ENCODE measurements at regions of chr17 and their contacts with region 1.

Region 1: DNA sequence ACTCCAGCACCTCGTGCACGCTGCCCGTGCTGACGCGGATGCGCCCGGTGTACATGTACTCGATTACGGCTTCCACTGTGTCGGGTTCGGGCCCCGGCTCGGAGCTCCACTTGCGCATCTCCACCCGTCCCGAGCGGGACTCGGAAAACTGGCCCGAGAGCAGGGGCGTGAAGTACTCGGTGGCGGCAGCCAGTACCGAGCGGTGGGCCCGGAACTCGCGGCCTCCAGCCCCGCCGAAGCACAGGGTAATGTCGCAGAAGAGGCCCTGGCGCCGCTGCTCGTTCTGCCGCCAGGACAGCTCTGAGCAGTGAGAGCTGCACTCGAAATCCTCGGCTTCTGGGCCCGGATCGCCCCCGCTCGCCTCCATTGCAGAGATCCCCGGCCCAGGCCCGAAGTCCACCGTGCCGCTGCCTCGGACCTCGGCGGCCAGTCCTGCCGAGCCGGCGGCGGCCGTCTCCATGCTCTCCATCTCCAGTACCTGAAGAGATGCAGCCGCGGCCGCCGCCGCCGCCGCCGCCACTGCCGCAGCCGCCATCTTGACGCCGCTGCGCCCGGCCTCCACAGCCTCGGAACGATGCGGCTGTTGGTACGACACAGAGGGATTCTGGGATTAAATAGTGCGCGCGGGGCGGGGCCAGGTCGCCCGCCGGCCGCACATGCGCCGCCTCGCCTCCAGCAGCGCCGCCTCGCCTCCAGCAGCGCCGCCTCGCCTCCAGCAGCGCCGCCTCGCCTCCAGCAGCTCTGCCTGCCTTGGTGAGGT is at the start of gene KLHL11:
- DNase-seq: peak; percentile 96

Region 2: DNA sequence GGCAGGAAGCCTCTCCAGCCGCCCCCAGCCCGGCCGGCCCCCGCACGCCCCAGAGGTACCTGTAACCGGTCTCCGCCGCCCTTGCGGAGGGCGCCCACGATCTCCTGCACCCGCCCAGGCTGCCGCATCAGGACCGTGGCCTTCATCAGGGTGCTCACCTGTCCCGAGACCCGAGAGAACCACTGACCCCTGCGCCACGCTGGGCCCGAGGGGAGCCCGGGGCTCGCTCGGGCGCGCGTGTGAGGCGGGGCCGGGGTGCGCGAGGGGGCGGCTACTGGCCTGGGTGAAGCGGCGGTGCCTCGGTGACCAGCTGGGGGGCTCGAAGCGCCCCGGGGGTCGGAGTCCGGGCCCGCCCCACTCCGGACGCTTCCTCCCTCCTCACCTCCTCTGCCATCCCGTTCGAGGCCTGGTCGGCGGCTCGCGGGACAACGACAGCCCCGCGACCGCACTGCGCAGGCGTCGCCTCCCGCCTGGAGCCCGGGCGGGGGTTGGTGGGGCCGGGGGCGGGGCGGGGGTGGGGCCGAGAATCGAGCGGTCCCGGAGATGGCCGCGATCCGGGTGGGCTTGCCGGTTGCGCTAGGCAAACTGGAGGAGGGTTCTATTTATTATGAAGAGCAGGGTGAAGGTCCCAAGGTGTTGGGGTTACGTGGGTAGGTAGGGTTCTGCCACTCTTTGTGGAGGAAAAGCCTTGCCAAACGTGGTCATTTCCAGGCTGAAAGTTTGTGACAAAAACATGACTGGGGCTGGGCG is 29.0 kb before region 1 on chr17 and contains the start of gene NT5C3B:
- CTCF ChIA-PET with region 1: no interaction called
- POLR2A ChIA-PET with region 1: interaction called, 12 read pairs
- DNase-seq: peak; percentile 98

Region 3: GRCh38 chr17:41848788-41849187 is 16.2 kb before region 1 on chr17:
- CTCF ChIA-PET with region 1: interaction called, 3 read pairs
- POLR2A ChIA-PET with region 1: interaction called, 12 read pairs
- DNase-seq: no peak

Region 4: DNA sequence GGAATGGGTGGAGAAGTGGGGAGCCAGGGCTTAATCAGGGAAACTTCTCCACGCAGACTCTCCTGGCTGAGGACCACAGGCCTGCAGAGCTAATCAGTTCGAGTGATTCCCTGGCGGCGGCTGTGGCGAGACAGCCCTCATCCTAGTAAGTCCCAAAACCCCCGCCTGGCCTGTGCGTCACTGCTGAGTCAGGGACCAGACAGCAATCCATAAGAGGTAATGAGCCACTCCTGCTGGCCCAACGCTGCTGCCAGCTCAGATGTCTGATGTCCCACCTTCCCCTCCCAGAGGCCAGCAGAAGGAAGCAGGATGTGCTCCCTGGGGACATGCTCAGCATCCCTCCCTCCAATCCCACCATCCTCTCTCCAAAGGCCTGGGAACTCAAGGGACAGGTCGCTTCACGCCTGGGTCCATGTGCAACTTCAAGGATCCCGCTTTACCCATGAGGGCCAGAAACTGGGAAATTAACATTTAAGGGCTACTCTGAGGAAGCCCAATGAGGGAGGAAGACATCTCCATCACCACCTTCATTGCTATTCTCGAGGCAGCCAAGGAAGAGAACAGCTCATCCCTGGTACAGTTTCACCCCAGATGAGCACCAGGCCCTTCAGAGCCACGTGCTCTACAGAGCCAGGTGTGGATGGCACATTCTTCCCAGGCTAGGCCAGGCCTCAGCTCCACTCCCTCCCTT is 45.8 kb after region 1 on chr17:
- CTCF ChIA-PET with region 1: no interaction called
- POLR2A ChIA-PET with region 1: no interaction called
- DNase-seq: no peak